Right cardiac atrium (tissue), 5 donors: ENCODE measurements at regions of chr6 and their contacts with region 1.

Region 1: DNA sequence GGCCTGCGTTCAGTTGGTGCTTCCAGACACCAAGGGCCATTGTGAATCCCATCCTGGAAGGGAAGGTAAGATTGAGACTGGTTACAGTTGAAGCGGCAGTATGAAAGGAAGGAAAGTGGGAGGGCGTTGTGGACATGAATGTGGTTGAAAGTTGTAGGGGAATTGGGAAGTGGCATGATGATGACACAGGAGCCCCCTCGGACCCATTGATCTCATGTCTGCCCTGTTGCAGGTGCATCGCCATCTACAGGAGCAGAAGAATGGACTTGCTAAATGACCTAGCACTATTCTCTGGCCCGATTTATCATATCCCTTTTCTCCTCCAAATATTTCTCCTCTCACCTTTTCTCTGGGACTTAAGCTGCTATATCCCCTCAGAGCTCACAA is 5.5 kb downstream of the HLA-DQA1 start:
- DNase-seq: no peak
- ATAC-seq: no peak
- H3K4me3 ChIP-seq: no peak overlapping the region
- H3K27ac ChIP-seq: no peak overlapping the region
- H3K4me1 ChIP-seq: no peaks in the 10 kb centered on the region
- H3K27me3 ChIP-seq: no peaks in the 10 kb centered on the region

Region 2: DNA sequence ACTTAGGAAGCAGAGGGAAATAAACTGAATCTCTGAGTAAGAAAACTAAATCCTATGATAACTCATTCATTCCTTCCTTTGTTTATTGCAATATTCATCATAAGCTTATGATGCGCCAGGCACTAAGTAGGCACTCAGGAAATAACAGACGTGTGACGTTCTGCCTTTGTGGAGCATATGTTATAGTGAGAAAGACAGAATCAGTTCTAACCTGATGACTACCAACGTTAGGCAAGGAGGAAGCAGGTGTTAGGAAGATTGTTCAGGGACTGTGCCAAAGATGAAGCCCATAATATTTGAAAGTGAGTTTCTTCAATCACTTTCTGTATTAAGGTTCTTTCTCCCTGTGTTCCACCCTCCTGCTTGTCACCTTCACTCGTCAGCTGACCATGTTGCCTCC is 102.1 kb after region 1 on chr6:
- intact Hi-C with region 1: loop called in 1 of 4 experiments (anchors 5 kb)
- DNase-seq: no peak
- ATAC-seq: no peak
- H3K4me3 ChIP-seq: no peak overlapping the region
- H3K27ac ChIP-seq: no peak overlapping the region
- H3K4me1 ChIP-seq: no peaks in the 10 kb centered on the region
- H3K27me3 ChIP-seq: no peaks in the 10 kb centered on the region